Right cardiac atrium (tissue), 5 donors: ENCODE measurements at regions of chr6 and their contacts with region 1.

Region 1: DNA sequence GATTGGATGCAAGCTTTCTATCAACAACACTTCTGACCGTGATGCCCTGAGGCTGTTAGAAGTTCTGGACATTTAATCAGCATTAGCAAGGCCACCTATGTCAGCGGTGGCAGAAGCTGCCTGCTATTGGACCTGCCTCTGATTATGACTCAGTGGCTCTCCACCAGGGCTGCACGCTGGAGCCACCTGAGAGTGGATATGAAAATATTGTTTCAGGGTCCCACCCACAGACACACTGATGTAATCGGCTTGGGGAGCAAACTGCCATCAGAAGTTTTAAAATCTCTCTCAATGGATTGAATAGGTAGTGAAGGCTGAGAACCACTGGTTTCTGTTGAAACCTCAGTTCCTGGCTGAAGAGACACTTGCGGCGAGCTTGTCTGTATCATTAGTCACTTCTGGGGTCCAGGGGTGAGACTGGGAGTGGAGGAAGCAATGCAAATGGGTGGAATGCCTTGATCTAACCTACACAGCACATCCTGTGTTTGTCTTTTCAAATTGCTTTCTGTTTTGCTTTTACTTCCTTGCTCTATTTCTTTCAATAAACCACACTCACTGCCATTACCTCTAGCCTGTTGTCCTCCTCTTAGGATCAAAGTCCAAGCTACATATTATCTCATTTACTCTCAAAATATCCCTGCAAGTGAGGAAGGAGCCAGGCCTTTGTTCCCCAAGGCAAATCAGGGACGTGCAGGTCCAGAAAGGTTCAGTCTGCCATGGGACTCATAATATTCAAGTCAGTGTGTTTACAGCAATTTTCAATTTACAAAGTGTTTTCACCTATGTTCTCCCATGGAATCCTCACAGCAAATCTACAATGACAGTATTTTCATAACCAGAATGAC is 4.2 kb downstream of the CLIC5 start:
- DNase-seq: peak; percentile 18 to 46 (median 32)
- ATAC-seq: peak; percentile 53 to 55
- H3K4me3 ChIP-seq: peak overlapping the region; percentile 9
- H3K27ac ChIP-seq: peak overlapping the region; percentile 84
- H3K4me1 ChIP-seq: peaks cover 8% of the 10 kb centered on the region
- H3K27me3 ChIP-seq: no peaks in the 10 kb centered on the region

Region 2: GRCh38 chr6:45930420-45931040 is 80.9 kb before region 1 on chr6:
- intact Hi-C with region 1: loop called in 1 of 4 experiments (anchors 5 kb)
- DNase-seq: peak; percentile 66 to 83 (median 82)
- ATAC-seq: peak; percentile 77 to 78
- H3K4me3 ChIP-seq: no peak overlapping the region
- H3K27ac ChIP-seq: no peak overlapping the region
- H3K4me1 ChIP-seq: no peaks in the 10 kb centered on the region
- H3K27me3 ChIP-seq: no peaks in the 10 kb centered on the region

Region 3: DNA sequence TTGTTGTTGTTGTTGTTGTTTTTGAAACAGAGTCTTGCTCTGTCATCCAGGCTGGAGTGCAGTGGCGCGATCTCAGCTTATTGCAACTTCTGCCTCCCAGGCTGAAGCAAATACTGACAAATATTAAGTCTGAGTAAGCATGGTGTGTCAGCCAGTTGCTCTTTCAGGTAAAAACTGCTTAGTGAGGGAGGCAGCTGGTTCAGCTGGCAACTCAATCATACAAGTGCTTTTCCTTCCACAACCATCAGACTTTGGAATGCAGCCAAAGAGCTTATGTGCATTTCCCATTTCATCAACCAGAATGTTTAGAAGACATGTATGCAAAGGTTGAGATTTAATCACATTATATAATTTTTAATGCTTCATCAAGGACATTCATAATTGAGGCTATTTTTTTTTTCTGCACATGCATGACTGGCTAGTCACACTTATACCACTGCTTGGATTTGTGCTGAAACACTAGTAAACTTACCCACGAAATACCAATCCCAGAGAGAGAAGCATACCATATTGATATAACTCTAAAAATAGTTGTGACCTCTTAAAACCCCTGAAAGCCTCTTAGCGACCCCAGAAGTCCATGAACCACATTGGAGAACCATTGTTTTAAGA is 51.8 kb before region 1 on chr6:
- intact Hi-C with region 1: loop called in 1 of 4 experiments (anchors 10 kb)
- DNase-seq: no peak
- ATAC-seq: no peak
- H3K4me3 ChIP-seq: no peak overlapping the region
- H3K27ac ChIP-seq: no peak overlapping the region
- H3K4me1 ChIP-seq: peaks cover 9% of the 10 kb centered on the region
- H3K27me3 ChIP-seq: no peaks in the 10 kb centered on the region

Region 4: DNA sequence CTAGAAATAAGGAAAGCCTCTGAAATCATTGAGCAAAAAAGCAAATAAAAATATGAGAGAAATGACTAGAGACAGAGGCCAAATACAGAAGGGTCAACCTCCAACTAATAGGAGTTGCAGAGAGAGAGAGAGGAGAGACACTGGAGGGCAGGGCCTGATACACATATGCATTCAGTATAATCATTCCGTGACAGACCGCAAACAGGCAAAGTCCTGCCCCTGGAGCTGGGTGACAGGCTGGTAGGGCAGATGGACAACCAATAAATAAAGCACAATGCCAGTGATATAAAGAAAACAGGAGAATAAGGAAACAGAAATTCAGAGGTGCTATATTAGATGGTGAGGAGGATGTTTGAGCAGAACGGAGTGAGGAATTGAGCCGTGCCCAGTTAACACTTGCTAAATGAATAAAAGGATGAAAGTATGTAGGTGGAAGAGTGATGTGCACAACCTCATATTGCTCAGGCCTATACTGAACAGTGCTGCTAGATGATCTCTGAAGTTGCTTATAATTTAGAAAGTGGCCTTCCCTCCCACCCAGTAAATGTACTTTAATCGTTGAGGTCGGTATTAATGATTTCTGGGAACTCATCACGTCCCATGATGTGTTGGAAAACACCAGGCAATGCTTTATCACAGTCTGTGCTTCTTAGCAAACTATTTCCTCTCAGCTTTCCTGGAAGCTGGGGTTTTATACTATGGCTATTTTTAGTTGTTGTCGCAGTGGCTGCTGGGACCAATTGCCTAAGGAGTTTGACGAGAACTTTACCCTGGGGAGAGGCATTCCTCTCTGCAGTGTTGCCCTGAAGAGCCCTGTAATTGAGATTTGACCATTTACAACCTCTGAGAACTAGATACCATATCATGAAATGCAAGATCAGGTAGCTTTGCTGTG is 41.8 kb after region 1 on chr6:
- intact Hi-C with region 1: no loop called
- DNase-seq: no peak
- ATAC-seq: peak; percentile 80 to 90
- H3K4me3 ChIP-seq: no peak overlapping the region
- H3K27ac ChIP-seq: peak overlapping the region; percentile 90
- H3K4me1 ChIP-seq: peaks cover 10% of the 10 kb centered on the region
- H3K27me3 ChIP-seq: no peaks in the 10 kb centered on the region

Region 5: DNA sequence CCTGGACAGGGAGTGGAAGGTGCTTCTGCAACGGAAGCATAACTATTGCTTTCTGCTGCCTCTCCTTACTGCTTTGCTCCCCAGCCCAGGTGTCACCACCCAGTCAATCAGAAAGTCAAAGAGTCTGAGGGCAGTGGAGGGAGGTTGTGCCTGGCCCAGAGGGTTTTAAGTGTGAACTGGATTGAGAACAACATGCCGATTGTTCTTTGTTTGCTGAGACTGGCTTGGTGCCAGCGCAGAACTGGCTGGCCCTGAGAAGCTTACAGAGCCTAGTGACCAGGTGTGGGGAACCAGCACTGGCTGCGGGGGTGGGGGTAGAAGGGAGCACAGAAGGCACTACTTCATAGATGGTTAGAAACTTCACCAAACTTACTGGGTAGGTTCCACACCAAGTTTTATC is 87.2 kb after region 1 on chr6:
- intact Hi-C with region 1: no loop called
- DNase-seq: peak in 2 of 3 donors; percentile 50 to 53
- ATAC-seq: peak in 1 of 2 donors; percentile 19
- H3K4me3 ChIP-seq: no peak overlapping the region
- H3K27ac ChIP-seq: no peak overlapping the region
- H3K4me1 ChIP-seq: peaks cover 3% of the 10 kb centered on the region
- H3K27me3 ChIP-seq: no peaks in the 10 kb centered on the region